ENCODE measurements at regions of chr3 and their contacts with region 1.

Region 1: DNA sequence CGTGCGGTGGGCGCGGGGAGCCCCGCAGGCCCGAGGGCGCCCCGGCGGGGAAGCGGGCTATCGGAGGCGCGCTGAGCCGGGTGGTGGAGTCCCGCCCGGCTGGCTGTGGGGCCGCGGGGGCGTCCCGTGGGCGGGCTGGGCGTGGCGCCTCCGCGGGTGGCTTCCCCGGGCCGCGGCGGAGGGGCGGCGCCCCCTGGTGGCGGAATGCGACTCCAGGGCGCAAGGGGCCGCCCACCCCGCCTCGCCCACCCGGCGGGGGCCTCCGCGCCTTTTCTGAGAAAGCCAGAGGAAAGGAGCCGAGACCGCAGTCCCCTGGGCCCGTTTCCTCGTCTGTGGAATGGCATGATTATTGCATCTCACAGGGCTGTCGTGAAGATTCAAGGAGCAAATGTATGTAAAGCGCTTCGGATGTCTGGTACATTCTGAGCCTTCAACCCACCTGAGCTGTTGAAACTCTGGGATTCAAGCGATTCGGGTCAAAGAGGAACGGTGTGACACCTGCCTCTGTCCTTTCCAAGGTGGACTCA is 31.9 kb upstream of the RAB6B start:
- DNase-seq: no peak
- ATAC-seq: peak; percentile 87
- H3K4me3 ChIP-seq: peak overlapping the region; percentile 51
- H3K27ac ChIP-seq: no peak overlapping the region; the same call in 1 of the 2 replicates
- H3K4me1 ChIP-seq: peaks cover under 1% of the 10 kb centered on the region
- H3K27me3 ChIP-seq: no peaks in the 10 kb centered on the region; the same call in 1 of the 2 replicates
- CTCF ChIP-seq: peak; percentile 71
- POLR2A ChIP-seq: no peak
- RAD21 ChIP-seq: peak; percentile 44

Region 2: DNA sequence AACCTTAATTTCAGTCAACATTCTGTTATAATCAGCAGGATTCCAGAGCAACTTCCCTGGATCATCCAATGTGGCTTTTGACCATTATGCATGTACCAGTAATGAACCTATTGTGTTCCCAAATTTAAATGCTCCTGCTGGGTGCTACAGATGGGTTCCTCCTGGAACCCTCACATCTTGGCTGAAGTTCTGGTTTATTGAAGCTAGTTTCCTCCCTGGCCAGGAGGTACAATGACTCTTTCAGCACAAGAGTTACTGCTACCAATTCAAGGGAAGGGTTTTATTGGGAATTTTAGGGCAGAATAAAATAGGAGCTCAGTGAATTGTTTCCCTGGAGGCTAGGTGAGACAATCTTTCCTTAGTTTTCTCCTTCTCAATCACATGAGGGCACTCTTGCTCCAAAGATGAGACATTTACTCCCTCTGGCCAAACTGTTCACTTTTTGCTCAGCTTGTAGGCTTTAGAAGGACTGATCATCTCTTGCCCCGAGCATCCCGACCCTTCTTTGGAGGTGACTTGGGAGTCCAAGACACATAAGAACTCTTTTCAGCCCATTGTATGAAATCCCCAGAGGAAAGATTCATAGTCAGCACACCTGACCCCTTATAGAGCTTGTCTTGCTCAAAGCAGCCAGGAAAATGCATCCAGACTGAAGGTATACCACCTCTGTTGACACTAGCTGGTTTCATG is 1196.6 kb before region 1 on chr3:
- CTCF ChIA-PET with region 1: interaction called, 3 read pairs
- POLR2A ChIA-PET with region 1: no interaction called
- dilution Hi-C with region 1: no loop called
- in situ Hi-C with region 1: loop called (anchors 25 kb)
- intact Hi-C with region 1: loop called (anchors 5 kb)
- DNase-seq: peak; percentile 57
- ATAC-seq: peak; percentile 94
- H3K4me3 ChIP-seq: no peak overlapping the region
- H3K27ac ChIP-seq: no peak overlapping the region
- H3K4me1 ChIP-seq: no peaks in the 10 kb centered on the region
- H3K27me3 ChIP-seq: peaks cover 6% of the 10 kb centered on the region
- CTCF ChIP-seq: peak; percentile 67
- POLR2A ChIP-seq: no peak
- RAD21 ChIP-seq: peak; percentile 80

Region 3: DNA sequence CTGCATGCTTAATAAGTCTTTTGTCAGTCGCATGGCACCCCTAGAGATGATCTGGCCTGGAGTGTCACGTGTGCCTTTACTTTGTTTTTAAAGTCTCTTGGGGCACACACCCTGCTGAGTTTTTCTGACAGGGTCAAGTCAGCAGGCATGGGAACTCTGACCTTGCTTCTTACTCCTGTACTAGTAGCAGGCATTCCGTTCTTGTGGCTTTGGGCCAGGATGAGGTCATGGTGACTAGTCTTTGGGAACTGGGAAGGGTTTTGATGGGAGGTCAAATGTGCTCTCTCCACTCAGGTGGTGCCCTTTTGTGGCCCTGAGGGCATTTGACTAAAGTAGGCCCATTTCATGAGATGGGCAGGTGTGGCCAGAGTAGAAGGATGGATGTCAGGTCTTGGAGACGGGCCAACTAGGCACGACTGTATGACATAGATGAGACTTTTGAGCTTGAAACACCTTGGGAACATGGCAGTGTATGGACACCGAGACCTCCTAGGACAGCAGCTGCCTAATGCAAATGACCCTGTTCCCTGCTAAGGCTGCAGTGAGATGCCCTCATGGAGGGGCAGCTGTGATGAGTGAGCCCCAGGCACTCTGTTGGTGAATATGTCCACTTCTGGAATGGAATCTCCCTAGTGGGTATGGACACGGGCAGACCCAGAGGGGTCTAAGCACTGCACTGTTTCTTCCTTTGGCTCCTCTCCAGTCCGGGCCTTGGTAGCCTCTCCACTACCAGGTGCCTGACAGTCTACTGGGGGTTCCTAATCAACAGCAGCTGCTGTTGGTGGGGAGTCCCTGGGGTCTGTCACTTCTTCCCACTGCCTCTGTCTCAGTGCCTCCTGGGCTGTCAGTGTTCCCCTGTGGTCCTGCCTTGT is 105.6 kb before region 1 on chr3:
- CTCF ChIA-PET with region 1: interaction called, 8 read pairs
- POLR2A ChIA-PET with region 1: no interaction called
- dilution Hi-C with region 1: no loop called
- in situ Hi-C with region 1: loop called (anchors 10 kb)
- intact Hi-C with region 1: loop called (anchors 1 kb)
- DNase-seq: peak; percentile 80
- ATAC-seq: peak; percentile 60
- H3K4me3 ChIP-seq: no peak overlapping the region
- H3K27ac ChIP-seq: no peak overlapping the region
- H3K4me1 ChIP-seq: no peaks in the 10 kb centered on the region
- H3K27me3 ChIP-seq: no peaks in the 10 kb centered on the region
- CTCF ChIP-seq: peak; percentile 40
- POLR2A ChIP-seq: no peak
- RAD21 ChIP-seq: peak; percentile 43

Region 4: GRCh38 chr3:133973249-133973980 is 45.8 kb after region 1 on chr3:
- CTCF ChIA-PET with region 1: no interaction called
- POLR2A ChIA-PET with region 1: no interaction called
- dilution Hi-C with region 1: no loop called
- in situ Hi-C with region 1: no loop called
- intact Hi-C with region 1: no loop called
- DNase-seq: no peak
- ATAC-seq: no peak
- H3K4me3 ChIP-seq: no peak overlapping the region
- H3K27ac ChIP-seq: no peak overlapping the region
- H3K4me1 ChIP-seq: no peaks in the 10 kb centered on the region
- H3K27me3 ChIP-seq: peaks cover 7% of the 10 kb centered on the region; the same call in 1 of the 2 replicates
- CTCF ChIP-seq: no peak
- POLR2A ChIP-seq: no peak
- RAD21 ChIP-seq: no peak

Region 5: DNA sequence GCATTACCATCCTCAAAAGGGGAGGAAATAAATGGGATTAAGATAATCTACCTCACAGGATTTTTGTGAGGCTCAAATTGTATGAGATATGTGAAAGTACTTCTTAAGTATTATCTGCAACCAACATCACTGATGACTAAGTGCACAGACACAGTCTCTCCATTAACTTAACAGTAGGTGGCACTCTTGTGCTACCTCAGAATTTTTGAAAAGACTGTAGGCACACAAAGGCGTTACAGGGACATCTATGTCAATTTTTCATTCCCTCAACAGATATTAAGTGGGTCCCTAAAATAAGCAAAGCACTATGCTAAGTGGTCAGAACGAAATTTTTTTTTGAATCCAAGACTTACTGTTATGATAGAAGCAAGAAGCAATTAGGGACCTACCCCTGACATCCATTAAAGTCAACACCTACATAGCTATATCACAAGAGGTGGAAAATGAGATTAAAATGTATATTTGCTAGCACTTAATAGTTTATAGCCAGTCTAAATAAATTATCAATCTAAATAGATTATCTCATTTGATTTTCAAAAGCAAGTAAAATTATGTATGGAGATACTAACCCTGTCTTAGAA is 270.2 kb after region 1 on chr3:
- CTCF ChIA-PET with region 1: interaction called, 6 read pairs
- POLR2A ChIA-PET with region 1: no interaction called
- dilution Hi-C with region 1: no loop called
- in situ Hi-C with region 1: no loop called
- intact Hi-C with region 1: loop called (anchors 5 kb)
- DNase-seq: peak; percentile 83
- ATAC-seq: peak; percentile 71
- H3K4me3 ChIP-seq: no peak overlapping the region
- H3K27ac ChIP-seq: no peak overlapping the region
- H3K4me1 ChIP-seq: peaks cover 10% of the 10 kb centered on the region
- H3K27me3 ChIP-seq: no peaks in the 10 kb centered on the region
- CTCF ChIP-seq: peak; percentile 90
- POLR2A ChIP-seq: no peak
- RAD21 ChIP-seq: peak; percentile 80

Region 6: GRCh38 chr3:134308350-134308891 is 380.8 kb after region 1 on chr3:
- CTCF ChIA-PET with region 1: no interaction called
- POLR2A ChIA-PET with region 1: no interaction called
- dilution Hi-C with region 1: no loop called
- in situ Hi-C with region 1: loop called (anchors 10 kb)
- intact Hi-C with region 1: no loop called
- DNase-seq: peak; percentile 76
- ATAC-seq: peak; percentile 77
- H3K4me3 ChIP-seq: peak overlapping the region; percentile 5; the same call in 1 of the 2 replicates
- H3K27ac ChIP-seq: peak overlapping the region; percentile 82
- H3K4me1 ChIP-seq: peaks cover 26% of the 10 kb centered on the region
- H3K27me3 ChIP-seq: no peaks in the 10 kb centered on the region
- CTCF ChIP-seq: peak; percentile 99
- POLR2A ChIP-seq: peak; percentile 65
- RAD21 ChIP-seq: peak; percentile 99

Measured in IMR-90 (cell line).